Prostate gland (tissue), 2 donors: ENCODE measurements at regions of chr16 and their contacts with region 1.

Region 1: DNA sequence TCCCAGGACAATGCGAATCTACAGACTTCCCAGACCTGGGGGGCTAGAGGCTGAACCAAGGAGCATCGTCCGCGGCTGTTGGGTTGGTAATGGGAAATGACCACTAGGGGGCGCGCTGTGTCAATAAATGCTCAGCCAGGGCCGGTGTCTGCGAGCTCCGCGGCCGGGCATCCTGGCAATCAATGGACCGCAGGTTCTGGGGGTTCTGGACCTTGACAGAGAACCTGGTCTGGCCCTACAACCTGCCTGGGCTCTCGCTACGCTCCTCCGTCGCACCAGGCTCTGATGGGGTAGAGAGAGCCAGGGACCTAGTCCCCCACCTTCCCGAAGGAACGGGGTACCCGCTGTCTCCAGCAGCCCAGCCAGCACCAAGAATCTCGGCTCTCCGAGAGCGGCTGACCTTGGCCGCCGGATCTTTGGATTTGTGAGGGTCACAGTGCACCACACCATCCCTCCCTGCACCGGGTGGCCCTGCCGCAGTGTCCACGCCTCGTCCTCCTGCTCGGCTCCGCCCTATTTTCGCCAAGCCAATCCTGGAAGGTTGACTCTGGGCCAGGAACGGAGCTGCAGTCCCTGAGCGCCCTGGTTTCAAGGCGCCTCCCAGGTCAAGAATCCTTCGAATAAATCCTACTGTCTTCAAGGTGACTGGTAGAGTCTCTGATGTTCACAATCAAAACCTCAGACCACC is 20.4 kb upstream of the BEAN1 start:
- DNase-seq: peak; percentile 80
- H3K4me3 ChIP-seq: peak overlapping the region; percentile 27 to 39
- H3K27ac ChIP-seq: no peak overlapping the region
- H3K4me1 ChIP-seq: peaks cover 5% of the 10 kb centered on the region
- H3K27me3 ChIP-seq: no peaks in the 10 kb centered on the region
- CTCF ChIP-seq: peak; percentile 69 to 86 (median 84)
- POLR2A ChIP-seq: no peak

Region 2: GRCh38 chr16:66608241-66609138 is 201.8 kb after region 1 on chr16:
- intact Hi-C with region 1: loop called (anchors 2 kb)
- DNase-seq: peak; percentile 90
- H3K4me3 ChIP-seq: no peak overlapping the region
- H3K27ac ChIP-seq: no peak overlapping the region
- H3K4me1 ChIP-seq: peaks cover 3% of the 10 kb centered on the region
- H3K27me3 ChIP-seq: no peaks in the 10 kb centered on the region
- CTCF ChIP-seq: peak; percentile 86 to 92 (median 90)
- POLR2A ChIP-seq: no peak

Region 3: DNA sequence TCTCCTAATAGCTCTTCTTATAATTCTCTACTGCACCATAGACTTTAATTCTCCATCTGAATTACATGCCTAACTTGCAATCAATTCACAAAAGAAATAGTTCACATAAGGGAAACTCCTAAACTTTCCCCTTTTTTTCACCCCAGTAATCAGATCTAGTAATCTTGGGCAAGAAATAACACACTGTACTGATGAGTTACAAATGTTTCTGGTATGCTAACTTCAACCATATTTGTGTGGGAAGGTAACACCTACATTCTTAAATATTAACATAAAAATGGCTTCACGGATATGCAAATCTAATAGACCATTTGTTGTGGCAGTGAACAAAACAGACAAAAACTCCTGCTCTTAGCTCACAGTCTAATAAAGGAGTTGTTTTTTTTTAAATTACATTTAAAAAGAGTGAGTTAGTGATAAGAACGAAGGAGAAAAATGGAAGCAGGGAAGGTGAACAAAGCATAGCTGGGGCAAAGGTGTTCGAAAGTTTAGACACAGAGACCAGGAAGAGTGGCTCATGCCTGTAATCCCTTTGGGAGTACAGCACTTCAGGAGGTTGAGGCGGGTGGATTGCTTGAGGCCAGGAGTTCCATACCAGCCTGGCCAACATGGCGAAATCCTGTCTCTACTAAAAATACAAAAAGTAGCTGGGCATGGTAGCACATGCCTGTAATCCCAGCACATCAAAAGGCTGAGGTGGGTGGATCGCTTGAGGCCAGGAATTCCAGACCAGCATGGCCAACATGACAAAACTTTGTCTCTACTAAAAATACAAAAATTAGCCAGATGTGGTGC is 232.6 kb after region 1 on chr16:
- intact Hi-C with region 1: no loop called
- DNase-seq: no peak
- H3K4me3 ChIP-seq: no peak overlapping the region
- H3K27ac ChIP-seq: no peak overlapping the region
- H3K4me1 ChIP-seq: no peaks in the 10 kb centered on the region
- H3K27me3 ChIP-seq: no peaks in the 10 kb centered on the region
- CTCF ChIP-seq: no peak
- POLR2A ChIP-seq: no peak

Region 4: DNA sequence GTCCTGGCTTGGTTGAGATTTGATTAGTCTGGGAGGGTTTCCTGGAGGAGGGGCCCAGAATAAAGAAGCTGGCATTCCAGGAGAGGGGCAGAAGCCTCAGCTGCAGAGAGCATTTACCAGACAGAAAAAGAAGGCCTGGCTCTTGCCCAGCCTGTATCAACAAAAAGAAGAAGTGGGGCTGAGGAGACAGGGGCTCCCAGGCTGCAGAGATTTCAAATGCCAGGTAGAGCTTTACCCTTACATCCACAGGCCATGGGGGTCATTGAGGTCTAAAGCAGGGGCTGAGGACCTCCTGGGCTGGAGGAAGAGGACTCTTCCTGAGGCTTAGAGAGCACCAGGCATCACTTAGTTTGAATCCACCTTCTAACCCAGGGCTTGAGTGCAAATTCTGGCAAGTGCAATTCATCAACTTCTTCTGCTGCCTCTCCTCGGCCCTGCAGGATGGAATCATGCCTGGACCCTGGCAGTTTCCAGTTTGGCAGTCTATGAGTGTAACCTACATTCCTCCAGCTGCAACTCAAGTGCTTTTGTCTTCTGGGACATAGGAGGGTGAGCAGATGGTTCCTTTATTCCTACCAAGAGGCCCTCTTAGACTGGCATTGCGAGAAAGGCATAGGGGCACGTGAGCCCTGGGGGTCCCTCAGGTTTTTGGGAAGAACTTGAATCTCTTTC is 452.9 kb after region 1 on chr16:
- intact Hi-C with region 1: loop called (anchors 10 kb)
- DNase-seq: no peak
- H3K4me3 ChIP-seq: no peak overlapping the region
- H3K27ac ChIP-seq: no peak overlapping the region
- H3K4me1 ChIP-seq: no peaks in the 10 kb centered on the region
- H3K27me3 ChIP-seq: no peaks in the 10 kb centered on the region
- CTCF ChIP-seq: no peak
- POLR2A ChIP-seq: no peak